ENCODE measurements at regions of chr4 and their contacts with region 1.

Region 1: GRCh38 chr4:98626350-98626749 is 32.1 kb downstream of the TSPAN5 start:
- DNase-seq: peak; percentile 93
- H3K4me3 ChIP-seq: peak overlapping the region in 2 of 3 experiments; percentile 19 to 25
- H3K27ac ChIP-seq: peak overlapping the region; percentile 66
- H3K4me1 ChIP-seq: peaks cover 45% of the 10 kb centered on the region
- H3K27me3 ChIP-seq: no peaks in the 10 kb centered on the region
- CTCF ChIP-seq: peak; percentile 4 to 19

Region 2: DNA sequence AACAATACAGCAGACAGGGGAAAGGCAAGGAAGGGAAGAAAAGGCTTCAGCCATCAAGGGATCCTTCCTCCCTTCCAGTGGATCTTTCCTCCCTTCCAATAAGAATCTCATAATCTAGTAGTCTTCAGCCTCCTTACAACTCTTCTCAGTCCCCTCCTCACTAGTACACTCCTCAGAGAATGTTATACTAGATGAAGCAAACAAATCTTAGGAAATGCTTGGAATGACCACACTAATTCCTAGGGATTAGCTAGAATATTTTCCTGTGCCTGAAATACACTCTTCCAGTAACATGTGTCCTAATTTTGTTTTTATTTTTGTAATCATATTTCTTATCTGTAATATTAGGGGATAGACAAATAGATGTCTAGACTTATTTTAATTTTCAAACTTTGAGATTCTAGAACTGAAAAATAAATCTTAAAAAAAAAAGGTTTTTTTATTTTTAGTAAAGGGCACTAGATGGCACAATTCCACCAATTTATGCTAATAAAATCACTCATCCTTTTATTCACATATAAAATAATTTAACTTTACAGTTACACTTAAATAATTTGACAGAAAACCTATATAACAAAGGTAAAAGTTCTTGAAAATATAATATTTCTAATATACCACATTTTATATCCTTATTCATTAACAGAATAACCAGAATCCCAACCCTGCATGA is 476.1 kb before region 1 on chr4:
- CTCF ChIA-PET with region 1: no interaction called
- dilution Hi-C with region 1: no loop called
- in situ Hi-C with region 1: no loop called
- intact Hi-C with region 1: loop called (anchors 10 kb)
- DNase-seq: no peak
- H3K4me3 ChIP-seq: no peak overlapping the region
- H3K27ac ChIP-seq: no peak overlapping the region
- H3K4me1 ChIP-seq: no peaks in the 10 kb centered on the region
- H3K27me3 ChIP-seq: no peaks in the 10 kb centered on the region
- CTCF ChIP-seq: peak in 1 of 2 donors; percentile 14

Region 3: GRCh38 chr4:98584265-98584664 is 42.1 kb before region 1 on chr4:
- CTCF ChIA-PET with region 1: no interaction called
- dilution Hi-C with region 1: no loop called
- in situ Hi-C with region 1: no loop called
- intact Hi-C with region 1: loop called (anchors 1 kb)
- DNase-seq: peak; percentile 37
- H3K4me3 ChIP-seq: no peak overlapping the region
- H3K27ac ChIP-seq: no peak overlapping the region
- H3K4me1 ChIP-seq: peaks cover 26% of the 10 kb centered on the region
- H3K27me3 ChIP-seq: no peaks in the 10 kb centered on the region
- CTCF ChIP-seq: no peak

Region 4: DNA sequence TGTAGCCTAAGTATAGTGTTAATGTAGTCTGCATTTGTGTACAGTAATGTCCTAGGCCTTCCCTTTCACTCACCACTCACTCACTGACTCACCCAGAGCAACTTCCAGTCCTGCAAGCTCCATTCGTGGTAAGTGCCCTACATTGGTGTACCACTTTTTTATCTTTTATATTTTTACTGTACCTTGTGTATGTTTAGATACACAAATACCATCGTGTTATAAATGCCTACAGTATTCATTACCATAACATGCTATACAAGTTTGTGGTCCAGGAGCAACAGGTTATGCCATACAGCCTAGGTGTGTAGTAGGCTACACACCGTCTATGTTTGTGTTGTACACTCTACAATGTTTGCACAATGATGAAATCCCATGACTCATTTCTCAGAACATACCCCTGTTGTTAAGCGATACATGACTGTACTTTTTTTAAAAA is 16.7 kb after region 1 on chr4:
- CTCF ChIA-PET with region 1: no interaction called
- dilution Hi-C with region 1: no loop called
- in situ Hi-C with region 1: no loop called
- intact Hi-C with region 1: loop called (anchors 2 kb)
- DNase-seq: peak; percentile 90
- H3K4me3 ChIP-seq: no peak overlapping the region
- H3K27ac ChIP-seq: peak overlapping the region; percentile 19
- H3K4me1 ChIP-seq: peaks cover 13% of the 10 kb centered on the region
- H3K27me3 ChIP-seq: no peaks in the 10 kb centered on the region
- CTCF ChIP-seq: no peak

Region 5: DNA sequence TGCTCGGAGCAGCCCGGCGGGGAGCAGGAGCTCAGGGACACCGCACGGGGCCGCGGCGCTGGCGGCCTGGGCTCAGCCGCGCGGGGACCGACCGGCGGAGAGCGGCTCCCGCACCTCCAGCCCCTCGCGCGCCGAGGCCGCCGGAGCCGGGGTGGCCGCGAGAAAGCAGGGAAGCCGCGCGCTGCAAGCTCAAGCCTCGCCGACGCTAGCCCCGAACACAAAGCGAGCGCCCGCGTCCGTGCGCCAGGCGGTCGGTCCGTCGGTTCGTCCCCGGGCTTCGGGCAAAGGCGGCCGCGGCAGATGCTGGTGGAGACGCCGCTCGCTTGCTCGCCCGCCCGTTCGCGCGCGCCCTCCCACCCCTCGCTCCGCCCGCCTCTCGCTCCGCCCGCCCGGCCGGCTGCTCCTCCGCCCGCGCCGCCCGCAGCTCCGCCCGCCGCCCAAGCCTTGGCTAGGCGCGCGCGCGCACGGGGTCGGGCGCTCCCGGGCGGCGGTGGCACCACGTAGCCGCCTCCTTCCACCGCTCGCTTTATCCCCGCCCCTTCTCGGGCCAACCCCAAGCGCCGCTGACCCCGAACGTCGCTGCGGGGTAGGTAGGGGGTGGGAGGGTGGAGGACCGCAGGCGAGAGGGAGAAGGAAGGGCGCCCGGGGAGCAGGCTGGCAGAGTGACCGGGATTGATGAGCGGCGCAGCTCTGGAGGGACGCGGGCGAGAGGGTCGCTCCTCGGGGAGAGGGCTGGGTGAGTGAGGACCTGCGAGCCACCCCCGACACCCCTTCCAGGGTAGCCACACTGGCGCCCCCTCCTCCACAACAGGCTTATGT is 32.1 kb after region 1 on chr4 and contains the start of gene TSPAN5:
- CTCF ChIA-PET with region 1: no interaction called
- dilution Hi-C with region 1: no loop called
- in situ Hi-C with region 1: no loop called
- intact Hi-C with region 1: loop called (anchors 1 kb)
- DNase-seq: peak; percentile 80
- H3K4me3 ChIP-seq: peak within 1 kb of the TSS; percentile 65 to 89 (median 83)
- H3K27ac ChIP-seq: peak within 1 kb of the TSS; percentile 57
- H3K4me1 ChIP-seq: peaks cover 57% of the 10 kb centered on the region
- H3K27me3 ChIP-seq: no peaks in the 10 kb centered on the region
- CTCF ChIP-seq: no peak
- total RNA-seq, gene TSPAN5: 19.0 to 38.4 TPM

Measured in mammary epithelial cell (primary cell).